Caco-2 (cell line): ENCODE measurements at regions of chr13 and their contacts with region 1.

Region 1: GRCh38 chr13:36858290-36858689 is 39.3 kb downstream of the RFXAP start:
- DNase-seq: peak in 1 of 2 experiments; percentile 63
- H3K4me3 ChIP-seq: no peak overlapping the region
- H3K4me3 Mint-ChIP-seq: no peak overlapping the region
- H3K27ac Mint-ChIP-seq: no peak overlapping the region
- H3K4me1 ChIP-seq: peaks cover 8% of the 10 kb centered on the region
- H3K4me1 Mint-ChIP-seq: no peaks in the 10 kb centered on the region
- H3K27me3 ChIP-seq: no peaks in the 10 kb centered on the region
- H3K27me3 Mint-ChIP-seq: no peaks in the 10 kb centered on the region
- CTCF ChIP-seq: peak; percentile 47 to 49

Region 2: GRCh38 chr13:36891752-36892151 is 33.5 kb after region 1 on chr13:
- CTCF ChIA-PET with region 1: no interaction called
- POLR2A ChIA-PET with region 1: no interaction called
- intact Hi-C with region 1: loop called (anchors 1 kb)
- DNase-seq: no peak
- H3K4me3 ChIP-seq: no peak overlapping the region
- H3K4me3 Mint-ChIP-seq: no peak overlapping the region
- H3K27ac Mint-ChIP-seq: no peak overlapping the region
- H3K4me1 ChIP-seq: peaks cover 15% of the 10 kb centered on the region
- H3K4me1 Mint-ChIP-seq: peaks cover 25% of the 10 kb centered on the region
- H3K27me3 ChIP-seq: no peaks in the 10 kb centered on the region
- H3K27me3 Mint-ChIP-seq: peaks cover 2% of the 10 kb centered on the region
- CTCF ChIP-seq: no peak

Region 3: DNA sequence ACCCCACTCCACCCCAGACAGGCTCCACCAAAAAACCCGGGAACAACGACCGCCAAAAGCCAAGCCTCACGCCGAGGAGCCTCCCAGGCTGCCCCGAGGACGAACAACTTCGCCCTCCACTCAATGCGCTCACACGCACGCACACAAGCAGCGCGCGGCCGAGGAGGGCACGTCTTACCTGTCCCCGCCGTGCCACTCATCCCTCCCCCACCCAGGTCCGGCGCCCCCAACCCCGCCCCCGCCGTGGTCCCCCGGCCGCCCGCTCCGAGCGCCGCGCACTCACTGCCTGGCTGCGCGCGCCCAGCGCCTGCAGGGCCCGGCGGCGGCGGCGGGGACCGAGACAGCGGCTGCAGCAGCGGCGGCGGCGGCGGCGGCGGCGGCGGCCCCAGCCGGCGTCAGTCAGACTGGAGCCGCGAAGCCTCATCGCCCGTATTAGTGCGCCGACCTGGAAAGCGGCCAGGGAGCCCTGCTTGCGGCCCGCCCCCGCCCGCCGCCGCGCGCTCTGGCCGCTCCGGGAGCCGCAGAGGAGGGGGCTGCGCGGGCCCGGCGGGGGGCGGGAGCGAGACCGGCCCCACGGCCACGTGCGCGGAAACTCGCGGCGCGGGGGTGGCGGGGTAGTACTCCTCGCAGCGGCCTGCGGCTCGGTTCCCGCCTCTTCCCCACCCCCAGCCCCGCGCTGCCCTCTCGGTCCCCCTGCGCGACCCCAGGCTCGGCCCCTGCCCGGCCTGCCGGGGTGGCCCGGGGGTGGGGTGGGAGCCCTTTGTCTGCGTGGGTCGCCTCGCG is 61.7 kb after region 1 on chr13 and contains the start of gene SMAD9:
- CTCF ChIA-PET with region 1: no interaction called
- POLR2A ChIA-PET with region 1: no interaction called
- intact Hi-C with region 1: loop called (anchors 5 kb)
- DNase-seq: peak in 1 of 2 experiments; percentile 57
- H3K4me3 ChIP-seq: peak within 1 kb of the TSS; percentile 60
- H3K4me3 Mint-ChIP-seq: peak within 1 kb of the TSS; percentile 75
- H3K27ac Mint-ChIP-seq: no peak within 1 kb of the TSS
- H3K4me1 ChIP-seq: no peaks in the 10 kb centered on the region
- H3K4me1 Mint-ChIP-seq: peaks cover 7% of the 10 kb centered on the region
- H3K27me3 ChIP-seq: no peaks in the 10 kb centered on the region
- H3K27me3 Mint-ChIP-seq: peaks cover 20% of the 10 kb centered on the region
- CTCF ChIP-seq: no peak
- total RNA-seq, gene SMAD9: 1.2 TPM in 2 replicates

Region 4: DNA sequence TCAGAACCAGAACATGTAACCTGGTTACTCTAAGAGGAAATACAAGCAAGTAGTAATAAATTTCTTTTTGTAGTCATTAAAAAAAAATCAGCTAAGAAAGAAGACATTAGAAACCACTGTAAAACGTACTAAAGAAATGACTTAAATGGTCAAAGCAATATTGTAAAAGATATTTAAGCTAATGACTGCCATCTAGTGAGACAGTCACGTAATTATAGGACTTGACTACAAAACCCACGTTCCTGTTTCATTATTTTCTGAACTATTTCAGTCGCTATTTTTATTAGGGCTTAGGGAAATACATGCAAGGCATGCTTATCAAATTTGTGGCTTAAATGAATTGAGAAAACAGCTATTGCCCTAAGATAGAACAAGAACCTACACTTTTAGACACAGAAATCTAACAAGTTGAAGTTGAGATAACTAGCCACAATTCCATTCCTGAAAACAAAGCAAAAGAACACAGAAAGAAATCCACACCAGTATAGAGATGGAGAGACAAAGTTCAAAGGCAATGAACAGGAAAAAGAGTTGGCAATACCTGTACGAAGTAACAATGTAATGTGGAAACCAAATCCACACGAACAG is 123.0 kb after region 1 on chr13:
- CTCF ChIA-PET with region 1: interaction called, 20 read pairs
- POLR2A ChIA-PET with region 1: interaction called, 6 read pairs
- intact Hi-C with region 1: loop called (anchors 1 kb)
- DNase-seq: no peak
- H3K4me3 ChIP-seq: no peak overlapping the region
- H3K4me3 Mint-ChIP-seq: no peak overlapping the region
- H3K27ac Mint-ChIP-seq: no peak overlapping the region
- H3K4me1 ChIP-seq: no peaks in the 10 kb centered on the region
- H3K4me1 Mint-ChIP-seq: no peaks in the 10 kb centered on the region
- H3K27me3 ChIP-seq: no peaks in the 10 kb centered on the region
- H3K27me3 Mint-ChIP-seq: no peaks in the 10 kb centered on the region
- CTCF ChIP-seq: peak in 1 of 2 experiments; percentile 39

Region 5: GRCh38 chr13:37068962-37069361 is 210.7 kb after region 1 on chr13:
- CTCF ChIA-PET with region 1: no interaction called
- POLR2A ChIA-PET with region 1: no interaction called
- intact Hi-C with region 1: loop called (anchors 2 kb)
- DNase-seq: no peak
- H3K4me3 ChIP-seq: no peak overlapping the region
- H3K4me3 Mint-ChIP-seq: no peak overlapping the region
- H3K27ac Mint-ChIP-seq: no peak overlapping the region
- H3K4me1 ChIP-seq: no peaks in the 10 kb centered on the region
- H3K4me1 Mint-ChIP-seq: no peaks in the 10 kb centered on the region
- H3K27me3 ChIP-seq: no peaks in the 10 kb centered on the region; the same call in 1 of the 2 replicates
- H3K27me3 Mint-ChIP-seq: peaks cover 8% of the 10 kb centered on the region
- CTCF ChIP-seq: no peak

Region 6: GRCh38 chr13:37681300-37682032 is 823.2 kb after region 1 on chr13:
- CTCF ChIA-PET with region 1: no interaction called
- POLR2A ChIA-PET with region 1: no interaction called
- intact Hi-C with region 1: no loop called
- DNase-seq: no peak
- H3K4me3 ChIP-seq: no peak overlapping the region
- H3K4me3 Mint-ChIP-seq: no peak overlapping the region
- H3K27ac Mint-ChIP-seq: no peak overlapping the region
- H3K4me1 ChIP-seq: no peaks in the 10 kb centered on the region
- H3K4me1 Mint-ChIP-seq: no peaks in the 10 kb centered on the region
- H3K27me3 ChIP-seq: no peaks in the 10 kb centered on the region
- H3K27me3 Mint-ChIP-seq: peaks cover 12% of the 10 kb centered on the region
- CTCF ChIP-seq: no peak